OCI-LY7 (cell line): ENCODE measurements at regions of chr14 and their contacts with region 1.

Region 1: DNA sequence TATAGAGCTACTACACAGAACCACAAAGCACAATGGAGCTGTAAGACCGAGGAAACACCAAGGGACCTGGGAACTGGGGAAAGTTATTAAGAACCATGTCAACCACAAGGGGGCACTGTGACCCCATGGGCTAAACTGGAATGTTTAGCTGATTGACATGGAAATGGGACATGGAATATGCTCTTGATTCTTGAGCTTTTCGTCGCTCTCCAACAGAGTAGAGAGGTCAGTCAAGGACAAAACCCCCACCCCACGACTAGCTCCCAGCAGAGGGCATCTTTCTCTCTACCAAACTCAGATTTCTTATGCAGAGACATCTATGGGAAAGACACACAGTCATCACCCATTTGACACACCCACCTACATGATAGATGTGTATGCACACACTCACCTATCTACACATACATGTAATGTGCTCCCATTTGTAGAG is 10.1 kb downstream of the NDRG2 start:
- DNase-seq: peak; percentile 79
- H3K4me3 ChIP-seq: no peak overlapping the region
- H3K27ac ChIP-seq: no peak overlapping the region
- H3K4me1 ChIP-seq: no peaks in the 10 kb centered on the region
- CTCF ChIP-seq: peak; percentile 98

Region 2: DNA sequence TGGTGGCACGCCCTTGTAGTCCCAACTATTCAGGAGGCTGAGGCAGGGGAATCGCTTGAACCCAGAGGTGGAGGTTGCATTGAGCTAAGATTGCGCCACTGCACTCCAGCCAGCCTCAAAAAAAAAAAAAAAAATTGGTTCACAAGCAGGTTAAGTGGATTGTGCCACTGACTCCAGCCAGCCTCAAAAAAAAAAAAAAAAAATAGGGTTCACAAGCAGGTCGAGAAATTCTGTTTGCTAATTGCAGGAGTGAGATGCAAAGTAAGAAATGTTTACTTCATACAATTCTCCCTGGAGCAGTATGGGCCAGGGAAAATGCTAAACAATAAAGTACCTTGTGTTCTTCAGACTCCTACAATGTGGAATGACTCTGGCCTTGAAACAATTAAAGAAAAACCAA is 240.4 kb before region 1 on chr14:
- CTCF ChIA-PET with region 1: no interaction called
- POLR2A ChIA-PET with region 1: no interaction called
- intact Hi-C with region 1: no loop called
- DNase-seq: no peak
- H3K4me3 ChIP-seq: no peak overlapping the region
- H3K27ac ChIP-seq: no peak overlapping the region
- H3K4me1 ChIP-seq: no peaks in the 10 kb centered on the region
- CTCF ChIP-seq: no peak

Region 3: GRCh38 chr14:21032326-21033132 is 17.8 kb after region 1 on chr14:
- CTCF ChIA-PET with region 1: interaction called, 10 read pairs
- POLR2A ChIA-PET with region 1: interaction called, 3 read pairs
- intact Hi-C with region 1: no loop called
- DNase-seq: no peak
- H3K4me3 ChIP-seq: no peak overlapping the region
- H3K27ac ChIP-seq: no peak overlapping the region
- H3K4me1 ChIP-seq: no peaks in the 10 kb centered on the region
- CTCF ChIP-seq: no peak

Region 4: GRCh38 chr14:21039585-21040369 is 25.0 kb after region 1 on chr14:
- CTCF ChIA-PET with region 1: interaction called, 3 read pairs
- POLR2A ChIA-PET with region 1: interaction called, 4 read pairs
- intact Hi-C with region 1: loop called (anchors 2 kb)
- DNase-seq: peak; percentile 47
- H3K4me3 ChIP-seq: no peak overlapping the region
- H3K27ac ChIP-seq: no peak overlapping the region
- H3K4me1 ChIP-seq: no peaks in the 10 kb centered on the region
- CTCF ChIP-seq: peak; percentile 76

Region 5: GRCh38 chr14:21048638-21049037 is 33.9 kb after region 1 on chr14:
- CTCF ChIA-PET with region 1: interaction called, 13 read pairs
- POLR2A ChIA-PET with region 1: interaction called, 5 read pairs
- intact Hi-C with region 1: no loop called
- DNase-seq: no peak
- H3K4me3 ChIP-seq: no peak overlapping the region
- H3K27ac ChIP-seq: no peak overlapping the region
- H3K4me1 ChIP-seq: no peaks in the 10 kb centered on the region
- CTCF ChIP-seq: no peak

Region 6: GRCh38 chr14:21092273-21093011 is 77.7 kb after region 1 on chr14:
- CTCF ChIA-PET with region 1: interaction called, 5 read pairs
- POLR2A ChIA-PET with region 1: interaction called, 4 read pairs
- intact Hi-C with region 1: loop called (anchors 1 kb)
- DNase-seq: peak; percentile 88
- H3K4me3 ChIP-seq: no peak overlapping the region
- H3K27ac ChIP-seq: no peak overlapping the region
- H3K4me1 ChIP-seq: peaks cover 20% of the 10 kb centered on the region
- CTCF ChIP-seq: peak; percentile 96

Region 7: GRCh38 chr14:21103710-21104447 is 89.1 kb after region 1 on chr14:
- CTCF ChIA-PET with region 1: interaction called, 13 read pairs
- POLR2A ChIA-PET with region 1: interaction called, 14 read pairs
- intact Hi-C with region 1: loop called (anchors 1 kb)
- DNase-seq: peak; percentile 97
- H3K4me3 ChIP-seq: peak overlapping the region; percentile 85
- H3K27ac ChIP-seq: peak overlapping the region; percentile 59
- H3K4me1 ChIP-seq: peaks cover 45% of the 10 kb centered on the region
- CTCF ChIP-seq: 0 out of 2 replicates have a peak, but pooled peaks have one; percentile 76